HepG2 (cell line): ENCODE measurements at regions of chr16 and their contacts with region 1.

Region 1: DNA sequence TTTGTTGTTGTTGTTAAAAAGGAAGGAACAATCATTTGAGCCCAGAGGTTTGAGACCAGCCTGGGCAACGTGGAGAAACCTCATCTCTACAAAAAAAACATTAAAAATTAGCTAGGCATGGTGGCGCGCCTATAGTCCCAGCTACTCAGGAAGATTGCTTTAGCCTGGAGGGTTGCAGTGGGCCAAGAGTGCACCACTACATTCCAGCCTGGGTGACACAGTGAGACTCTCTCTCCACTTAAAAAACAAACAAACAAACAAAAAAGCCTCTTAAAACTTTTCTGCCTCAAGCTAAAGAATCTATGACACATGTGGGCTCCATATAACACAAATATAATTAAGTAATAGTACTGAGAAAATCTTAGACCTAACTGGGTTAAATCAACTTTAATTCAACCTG is 12.5 kb downstream of the MBTPS1 start:
- DNase-seq: no peak
- ATAC-seq: no peak
- H3K4me3 ChIP-seq: no peak overlapping the region
- H3K27ac ChIP-seq: no peak overlapping the region
- H3K4me1 ChIP-seq: peaks cover 11% of the 10 kb centered on the region; the same call in 1 of the 2 replicates
- H3K27me3 ChIP-seq: no peaks in the 10 kb centered on the region
- CTCF ChIP-seq: no peak
- EP300 ChIP-seq: no peak
- POLR2A ChIP-seq: no peak
- RAD21 ChIP-seq: no peak

Region 2: DNA sequence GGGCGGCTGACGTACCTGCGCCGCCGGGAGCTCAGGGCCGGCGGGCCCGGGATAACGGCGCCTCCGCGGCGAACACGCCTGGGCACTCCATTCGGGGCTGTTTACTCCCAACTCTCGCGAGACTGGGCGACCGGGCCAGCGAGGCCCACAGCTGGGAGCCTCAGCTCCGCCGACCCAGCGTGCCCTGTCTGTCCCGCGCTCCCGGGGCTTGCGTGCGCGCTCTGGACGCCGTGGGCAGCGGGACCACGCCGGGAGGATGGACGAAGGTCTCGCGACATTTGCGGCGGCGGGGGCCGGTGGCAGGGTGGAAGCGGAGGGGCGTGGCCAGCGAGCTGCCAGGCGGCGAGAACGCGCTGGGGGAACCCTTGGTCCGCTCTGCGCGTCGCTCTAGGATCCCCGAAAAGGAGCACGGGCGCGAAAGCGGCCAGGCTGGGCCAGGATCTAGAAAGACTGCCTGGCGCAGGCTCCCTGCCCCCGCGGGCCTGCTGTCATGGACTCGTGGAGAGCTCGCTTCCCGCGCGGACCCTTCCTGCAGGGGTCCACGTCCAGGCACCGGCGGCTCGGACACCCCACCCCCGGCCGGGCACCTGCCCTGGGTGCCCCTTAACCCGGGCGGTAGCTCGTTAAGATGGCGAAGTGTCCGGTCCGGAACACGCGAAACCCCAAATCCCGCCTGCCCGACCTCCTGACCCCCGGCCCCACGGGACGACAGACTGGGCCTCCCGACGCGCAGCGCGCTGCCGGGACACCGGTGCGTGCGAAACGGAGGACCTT is 12.7 kb after region 1 on chr16 and contains the start of gene MBTPS1:
- CTCF ChIA-PET with region 1: no interaction called
- POLR2A ChIA-PET with region 1: interaction called, 16 read pairs
- in situ Hi-C with region 1: no loop called
- intact Hi-C with region 1: no loop called
- DNase-seq: peak; percentile 97
- ATAC-seq: peak; percentile 96
- H3K4me3 ChIP-seq: peak within 1 kb of the TSS; percentile 92 to 99 (median 93)
- H3K27ac ChIP-seq: peak within 1 kb of the TSS; percentile 85
- H3K4me1 ChIP-seq: peaks cover 30% of the 10 kb centered on the region
- H3K27me3 ChIP-seq: peaks cover 0 to 3% of the 10 kb centered on the region in 2 experiments; a peak in 1 of 5 replicates
- CTCF ChIP-seq: peak; percentile 32
- EP300 ChIP-seq: no peak; a peak in 1 of 4 replicates
- POLR2A ChIP-seq: peak; percentile 92 to 95
- RAD21 ChIP-seq: peak; percentile 37
- total RNA-seq, gene MBTPS1: 42.0 and 56.7 TPM in 2 replicates